Naive thymus-derived CD4-positive, alpha-beta T cell (primary cell): ENCODE measurements at regions of chr2 and their contacts with region 1.

Region 1: DNA sequence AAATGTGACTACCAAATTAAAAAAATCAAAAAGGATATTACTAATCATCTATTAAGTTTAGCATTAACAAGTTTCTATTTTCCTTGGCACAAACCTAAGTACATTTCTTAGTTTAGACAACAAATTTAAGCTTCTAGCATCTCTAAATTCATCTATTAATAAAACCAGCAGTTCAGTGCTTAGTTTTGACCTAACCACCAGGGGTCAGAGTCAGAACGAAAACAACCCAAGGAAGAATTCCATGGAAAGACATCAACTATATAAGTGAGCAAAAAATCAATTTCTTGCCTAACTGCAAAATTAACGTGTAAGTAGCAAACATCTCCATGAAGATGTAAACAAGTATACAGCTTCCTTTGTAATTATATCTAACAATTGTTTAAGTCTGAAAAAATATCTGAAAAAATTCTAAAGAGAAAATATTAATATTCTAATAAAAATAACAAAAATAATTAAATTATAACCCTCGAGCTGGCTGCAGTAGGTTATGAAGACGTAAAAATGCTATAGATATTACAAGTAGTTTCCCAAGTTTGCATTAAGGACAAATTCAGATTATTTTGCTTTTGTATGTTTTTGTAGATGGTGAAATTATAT is 83.7 kb downstream of the CERKL start:
- DNase-seq: peak in 1 of 9 donors; percentile 13
- ATAC-seq: no peak
- H3K4me3 ChIP-seq: no peak overlapping the region
- H3K4me3 Mint-ChIP-seq: no peak overlapping the region
- H3K27ac ChIP-seq: no peak overlapping the region
- H3K27ac Mint-ChIP-seq: no peak overlapping the region
- H3K4me1 ChIP-seq: no peaks in the 10 kb centered on the region
- H3K4me1 Mint-ChIP-seq: peaks cover 0 to 3% (median 1%) of the 10 kb centered on the region in 7 donors
- H3K27me3 ChIP-seq: peaks cover 0 to 4% of the 10 kb centered on the region in 2 donors
- H3K27me3 Mint-ChIP-seq: peaks cover 0 to 25% (median 4%) of the 10 kb centered on the region in 5 donors

Region 2: GRCh38 chr2:181077128-181077709 is 496.0 kb before region 1 on chr2:
- CTCF ChIA-PET with region 1: no interaction called
- POLR2A ChIA-PET with region 1: no interaction called
- intact Hi-C with region 1: loop called in 1 of 2 experiments (anchors 1 kb)
- DNase-seq: peak in 7 of 9 donors; percentile 49 to 76 (median 64)
- ATAC-seq: peak; percentile 90
- H3K4me3 ChIP-seq: no peak overlapping the region
- H3K4me3 Mint-ChIP-seq: no peak overlapping the region
- H3K27ac ChIP-seq: no peak overlapping the region
- H3K27ac Mint-ChIP-seq: no peak overlapping the region
- H3K4me1 ChIP-seq: no peaks in the 10 kb centered on the region
- H3K4me1 Mint-ChIP-seq: peaks cover 0 to 11% (median 0%) of the 10 kb centered on the region in 7 donors
- H3K27me3 ChIP-seq: no peaks in the 10 kb centered on the region
- H3K27me3 Mint-ChIP-seq: peaks cover 0 to 14% (median 0%) of the 10 kb centered on the region in 5 donors

Region 3: DNA sequence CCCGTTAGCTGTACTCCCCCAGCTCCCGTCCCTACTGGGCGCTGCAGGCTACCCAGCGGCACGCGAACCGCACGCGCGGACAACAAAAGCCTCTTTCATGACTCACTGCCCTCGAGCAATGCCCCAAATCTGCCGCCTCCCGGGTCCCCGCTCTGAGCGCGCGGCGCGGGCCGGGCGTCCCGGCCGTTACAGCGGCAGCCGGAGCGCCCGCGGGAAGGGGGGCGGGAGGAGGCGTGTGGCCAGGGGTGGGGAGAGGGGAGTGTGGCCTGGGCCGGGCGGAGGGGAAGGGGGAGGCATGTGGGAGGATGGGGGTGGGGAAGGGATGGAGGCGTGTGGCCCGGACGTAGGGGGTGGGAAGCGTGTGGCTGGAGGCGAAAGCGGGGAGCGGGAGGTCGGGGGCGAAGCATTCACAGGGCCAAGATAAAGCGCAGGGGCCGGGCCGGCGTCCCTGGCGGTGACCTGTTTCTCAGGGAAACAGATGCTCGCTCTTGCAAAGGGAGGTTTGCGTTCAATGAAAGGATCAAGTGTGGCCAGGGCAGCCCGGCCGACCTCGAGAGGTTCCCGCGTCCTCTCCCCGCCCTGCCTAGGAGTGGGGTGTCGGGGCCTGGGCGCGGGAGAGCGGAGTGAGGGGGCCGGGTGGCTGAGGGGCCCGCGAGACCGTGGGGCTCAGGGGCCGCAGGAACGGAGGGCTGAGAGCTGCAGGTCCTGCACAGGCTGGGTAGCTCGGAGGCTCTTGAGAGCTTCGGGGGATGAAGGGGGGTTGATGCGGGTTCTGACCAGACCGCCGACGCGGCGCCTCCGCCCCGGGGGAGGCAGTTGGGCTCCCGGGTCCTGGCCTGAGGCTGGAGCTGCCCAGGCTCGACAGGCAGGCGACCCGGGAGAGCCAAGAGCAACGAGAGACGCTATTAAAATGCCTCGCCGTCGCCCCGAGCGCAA is 110.5 kb after region 1 on chr2:
- CTCF ChIA-PET with region 1: no interaction called
- POLR2A ChIA-PET with region 1: no interaction called
- intact Hi-C with region 1: loop called in 1 of 2 experiments (anchors 5 kb)
- DNase-seq: peak in 1 of 9 donors; percentile 26
- ATAC-seq: no peak
- H3K4me3 ChIP-seq: no peak overlapping the region
- H3K4me3 Mint-ChIP-seq: peak overlapping the region; percentile 51 to 81 (median 70)
- H3K27ac ChIP-seq: no peak overlapping the region
- H3K27ac Mint-ChIP-seq: peak overlapping the region in 1 of 9 donors; percentile 69
- H3K4me1 ChIP-seq: peaks cover 0 to 24% of the 10 kb centered on the region in 2 donors
- H3K4me1 Mint-ChIP-seq: peaks cover 31 to 59% (median 44%) of the 10 kb centered on the region in 7 donors
- H3K27me3 ChIP-seq: peaks cover 28 to 37% of the 10 kb centered on the region in 2 donors
- H3K27me3 Mint-ChIP-seq: peaks cover 84 to 96% (median 86%) of the 10 kb centered on the region in 5 donors

Region 4: GRCh38 chr2:183359867-183360266 is 1786.6 kb after region 1 on chr2:
- CTCF ChIA-PET with region 1: no interaction called
- POLR2A ChIA-PET with region 1: no interaction called
- intact Hi-C with region 1: no loop called
- DNase-seq: no peak
- ATAC-seq: no peak
- H3K4me3 ChIP-seq: no peak overlapping the region
- H3K4me3 Mint-ChIP-seq: no peak overlapping the region
- H3K27ac ChIP-seq: no peak overlapping the region
- H3K27ac Mint-ChIP-seq: no peak overlapping the region
- H3K4me1 ChIP-seq: no peaks in the 10 kb centered on the region
- H3K4me1 Mint-ChIP-seq: no peaks in the 10 kb centered on the region
- H3K27me3 ChIP-seq: no peaks in the 10 kb centered on the region
- H3K27me3 Mint-ChIP-seq: no peaks in the 10 kb centered on the region